ENCODE measurements at regions of chr2 and their contacts with region 1.

Region 1: DNA sequence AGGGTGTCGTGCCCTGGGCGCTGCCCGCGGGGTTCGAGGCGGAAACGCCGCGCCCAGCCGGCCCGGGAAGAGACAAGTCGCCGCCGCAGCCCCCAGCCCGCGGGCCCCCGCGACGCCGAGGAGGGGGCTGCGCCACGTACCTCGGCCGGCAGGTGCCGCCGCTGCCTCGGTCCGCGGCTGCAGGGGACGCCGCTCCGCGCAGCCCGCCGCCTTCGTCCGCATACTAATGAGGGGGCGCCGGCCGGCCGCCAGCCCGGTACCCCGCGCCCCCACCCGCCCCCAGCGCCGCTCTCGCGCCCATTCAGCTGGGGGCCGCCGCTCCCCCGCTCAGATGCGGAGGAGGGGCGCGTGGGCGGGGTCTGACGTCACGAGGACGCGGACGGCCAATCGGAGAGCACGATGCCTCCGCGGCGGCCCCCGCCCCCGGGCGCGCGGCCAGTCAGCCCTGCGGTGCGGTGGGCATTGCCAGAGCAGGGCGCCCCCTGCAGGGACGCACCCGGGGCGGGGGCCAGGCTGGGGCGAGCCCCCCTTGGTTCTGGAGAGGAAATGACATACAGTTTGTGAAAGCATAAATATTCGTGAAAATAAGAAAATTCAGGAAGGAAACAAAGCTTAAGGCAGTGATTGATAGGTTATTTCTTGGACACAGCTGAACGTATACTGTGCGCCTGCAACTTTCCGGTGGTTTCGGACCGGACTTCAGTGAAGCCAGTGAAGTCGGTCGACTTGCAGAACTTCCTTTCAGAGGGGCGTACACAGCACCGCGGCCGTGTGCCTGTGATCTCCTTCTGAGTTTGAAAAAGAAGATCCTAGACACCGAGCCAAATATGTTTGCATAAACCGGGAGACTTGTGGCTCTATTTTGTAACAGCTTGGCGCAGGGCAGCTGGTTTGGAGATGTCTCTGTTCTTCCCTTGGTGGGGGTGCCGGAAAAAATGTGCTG is at the start of gene ST3GAL5:
- DNase-seq: peak; percentile 89
- H3K4me3 Mint-ChIP-seq: peak within 1 kb of the TSS; percentile 88
- H3K27ac Mint-ChIP-seq: peak within 1 kb of the TSS; percentile 87
- H3K4me1 Mint-ChIP-seq: peaks cover 60% of the 10 kb centered on the region
- H3K27me3 Mint-ChIP-seq: no peaks in the 10 kb centered on the region
- total RNA-seq, gene ST3GAL5: 9.5 to 10.4 TPM

Region 2: GRCh38 chr2:85750587-85751575 is 138.1 kb before region 1 on chr2:
- CTCF ChIA-PET with region 1: no interaction called
- intact Hi-C with region 1: loop called (anchors 5 kb)
- DNase-seq: peak; percentile 76
- H3K4me3 Mint-ChIP-seq: no peak overlapping the region
- H3K27ac Mint-ChIP-seq: no peak overlapping the region
- H3K4me1 Mint-ChIP-seq: peaks cover 14% of the 10 kb centered on the region
- H3K27me3 Mint-ChIP-seq: peaks cover 58% of the 10 kb centered on the region

Region 3: GRCh38 chr2:85852937-85853498 is 35.9 kb before region 1 on chr2:
- CTCF ChIA-PET with region 1: interaction called, 15 read pairs
- intact Hi-C with region 1: loop called (anchors 1 kb)
- DNase-seq: peak; percentile 70
- H3K4me3 Mint-ChIP-seq: peak overlapping the region; percentile 74
- H3K27ac Mint-ChIP-seq: peak overlapping the region; percentile 98
- H3K4me1 Mint-ChIP-seq: peaks cover 70% of the 10 kb centered on the region
- H3K27me3 Mint-ChIP-seq: no peaks in the 10 kb centered on the region

Region 4: DNA sequence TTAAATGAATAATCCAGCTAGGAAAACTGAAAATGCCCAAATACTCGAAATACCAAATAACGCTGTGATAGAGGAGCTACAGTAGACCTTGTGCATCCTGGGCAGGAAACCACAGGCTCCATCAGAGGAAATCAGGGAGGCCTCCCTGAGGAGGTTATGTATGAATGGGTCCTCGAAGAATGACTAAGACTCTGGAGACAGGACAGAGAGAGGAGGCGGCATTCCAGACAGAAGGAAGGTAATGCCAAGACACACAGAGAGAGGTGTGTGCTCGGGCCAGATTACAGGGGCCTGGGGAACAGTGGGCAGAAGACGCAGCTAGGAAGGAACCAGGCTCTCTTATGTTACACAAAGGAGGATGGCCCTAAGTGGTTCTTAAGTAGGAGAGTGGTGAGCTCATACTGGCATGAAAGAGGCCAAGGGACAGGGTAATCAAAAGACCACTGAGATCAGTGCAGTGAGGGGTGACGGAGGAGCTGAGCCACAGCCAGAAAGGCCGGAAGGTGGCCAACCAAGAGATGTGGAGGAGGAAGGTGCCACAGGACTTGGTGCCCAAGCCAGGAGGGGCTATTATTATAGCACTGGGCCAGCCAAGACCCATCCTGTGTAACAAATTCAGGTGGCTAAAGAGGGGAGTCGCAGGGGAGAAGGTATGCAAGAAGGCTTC is 10.1 kb before region 1 on chr2:
- CTCF ChIA-PET with region 1: interaction called, 18 read pairs
- intact Hi-C with region 1: no loop called
- DNase-seq: peak; percentile 31
- H3K4me3 Mint-ChIP-seq: no peak overlapping the region
- H3K27ac Mint-ChIP-seq: no peak overlapping the region
- H3K4me1 Mint-ChIP-seq: peaks cover 59% of the 10 kb centered on the region
- H3K27me3 Mint-ChIP-seq: no peaks in the 10 kb centered on the region

Region 5: DNA sequence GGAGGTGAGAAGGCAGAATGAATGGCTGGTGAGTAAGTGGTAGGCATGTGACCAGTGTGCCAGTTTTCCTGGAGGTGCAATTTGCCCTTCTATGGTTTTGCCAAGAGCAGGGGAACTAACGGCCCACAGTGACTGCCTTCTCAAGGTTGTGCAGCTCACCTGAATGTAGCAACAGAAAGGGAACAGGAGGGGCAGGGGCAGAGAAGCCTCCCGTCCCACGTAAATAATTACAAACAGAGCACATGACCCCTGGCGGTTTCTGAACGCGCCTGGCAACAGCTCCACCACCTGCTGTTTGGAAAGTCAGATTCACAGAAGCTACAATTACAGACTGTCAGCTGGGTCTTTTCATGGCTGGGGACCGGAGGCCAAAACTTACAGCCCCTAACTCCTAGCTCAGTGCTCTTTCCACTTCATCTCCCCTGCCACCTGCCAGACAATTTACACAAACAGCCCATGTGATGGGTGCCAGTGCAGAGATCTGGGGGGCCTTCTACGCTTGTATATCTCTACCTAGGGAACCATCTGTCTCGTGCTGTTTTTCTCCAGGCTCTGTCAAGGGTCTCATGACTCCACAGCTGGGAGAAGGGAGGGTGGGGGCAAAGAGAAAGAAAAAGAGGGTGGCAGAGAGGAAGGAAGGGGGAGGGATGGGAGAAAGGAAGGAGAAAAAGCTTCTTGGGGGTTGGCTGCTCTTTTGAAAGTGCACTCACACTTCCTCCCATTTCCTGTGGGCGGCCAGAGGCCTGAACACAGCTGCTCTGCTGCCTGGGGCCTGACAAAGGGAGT is 147.1 kb after region 1 on chr2:
- CTCF ChIA-PET with region 1: interaction called, 10 read pairs
- intact Hi-C with region 1: loop called (anchors 1 kb)
- DNase-seq: peak; percentile 74
- H3K4me3 Mint-ChIP-seq: peak overlapping the region; percentile 58
- H3K27ac Mint-ChIP-seq: peak overlapping the region; percentile 95
- H3K4me1 Mint-ChIP-seq: peaks cover 81% of the 10 kb centered on the region
- H3K27me3 Mint-ChIP-seq: no peaks in the 10 kb centered on the region

Region 6: GRCh38 chr2:86195055-86195807 is 306.3 kb after region 1 on chr2 and contains the start of gene IMMT:
- CTCF ChIA-PET with region 1: no interaction called
- intact Hi-C with region 1: loop called (anchors 10 kb)
- DNase-seq: peak; percentile 96
- H3K4me3 Mint-ChIP-seq: peak within 1 kb of the TSS; percentile 89
- H3K27ac Mint-ChIP-seq: peak within 1 kb of the TSS; percentile 90
- H3K4me1 Mint-ChIP-seq: peaks cover 47% of the 10 kb centered on the region
- H3K27me3 Mint-ChIP-seq: no peaks in the 10 kb centered on the region
- total RNA-seq, gene IMMT: 164 to 168 TPM